ENCODE measurements at regions of chr12 and their contacts with region 1.

Region 1: GRCh38 chr12:38906482-38907170 is 1.2 kb upstream of the CPNE8 start:
- DNase-seq: peak; percentile 93
- H3K4me3 Mint-ChIP-seq: peak overlapping the region; percentile 93
- H3K27ac Mint-ChIP-seq: peak overlapping the region; percentile 95
- H3K4me1 Mint-ChIP-seq: peaks cover 32% of the 10 kb centered on the region
- H3K27me3 Mint-ChIP-seq: peaks cover 18% of the 10 kb centered on the region

Region 2: GRCh38 chr12:38316391-38317129 is 590.1 kb before region 1 on chr12 and contains the start of gene ALG10B:
- intact Hi-C with region 1: loop called (anchors 5 kb)
- DNase-seq: peak; percentile 98
- H3K4me3 Mint-ChIP-seq: peak within 1 kb of the TSS; percentile 98
- H3K27ac Mint-ChIP-seq: peak within 1 kb of the TSS; percentile 96
- H3K4me1 Mint-ChIP-seq: peaks cover 13% of the 10 kb centered on the region
- H3K27me3 Mint-ChIP-seq: no peaks in the 10 kb centered on the region
- total RNA-seq, gene ALG10B: 15.1 and 16.0 TPM in 2 replicates

Region 3: DNA sequence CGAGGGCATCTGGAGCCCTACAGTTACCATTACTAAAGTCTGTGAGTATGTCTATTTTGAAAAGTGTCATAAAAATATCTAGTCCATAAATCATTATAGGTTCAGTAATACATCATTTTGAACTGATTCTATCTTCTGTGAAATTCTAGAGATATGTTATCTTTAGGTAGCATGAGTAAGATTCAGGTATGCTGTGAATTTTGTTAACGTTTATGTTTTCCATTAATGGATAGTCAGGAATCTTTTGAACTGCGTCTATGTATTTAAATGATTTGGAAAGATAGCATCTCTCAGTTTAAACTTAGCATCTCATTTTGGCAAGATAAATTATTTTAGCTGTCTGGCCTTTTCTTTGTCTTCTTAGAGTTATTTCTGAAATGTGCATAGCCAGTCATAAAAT is 581.7 kb before region 1 on chr12:
- intact Hi-C with region 1: loop called (anchors 5 kb)
- DNase-seq: no peak
- H3K4me3 Mint-ChIP-seq: no peak overlapping the region
- H3K27ac Mint-ChIP-seq: no peak overlapping the region
- H3K4me1 Mint-ChIP-seq: no peaks in the 10 kb centered on the region
- H3K27me3 Mint-ChIP-seq: no peaks in the 10 kb centered on the region

Region 4: DNA sequence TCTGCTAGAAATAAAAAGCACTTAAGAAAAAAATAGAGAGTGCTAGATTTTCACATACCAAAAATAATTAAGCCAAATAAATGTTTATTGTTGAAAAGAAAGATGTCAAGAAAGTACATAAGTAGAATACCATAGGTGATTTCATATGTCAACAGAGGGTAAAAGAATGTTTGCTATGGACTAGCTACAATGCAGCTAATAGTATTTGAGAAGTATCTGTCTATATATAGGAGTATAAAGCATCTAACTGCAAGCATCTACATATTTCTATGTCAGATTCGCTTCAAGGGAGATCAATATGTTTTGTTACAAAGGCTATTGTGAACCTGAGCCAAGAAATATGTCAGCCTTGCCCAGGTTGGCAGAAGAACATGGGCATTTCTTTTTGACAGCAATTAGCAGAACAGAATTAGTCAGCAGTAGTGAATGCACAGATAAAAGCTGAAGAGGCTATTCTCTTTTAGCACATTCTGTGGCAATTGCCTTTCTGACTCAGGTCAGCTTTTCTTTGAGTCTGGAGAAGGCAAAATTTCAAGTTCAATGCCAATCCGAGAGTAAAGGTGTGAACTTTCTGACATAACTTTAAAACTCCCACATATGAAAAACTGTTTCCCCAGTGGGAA is 450.0 kb before region 1 on chr12:
- intact Hi-C with region 1: no loop called
- DNase-seq: no peak
- H3K4me3 Mint-ChIP-seq: no peak overlapping the region
- H3K27ac Mint-ChIP-seq: no peak overlapping the region
- H3K4me1 Mint-ChIP-seq: no peaks in the 10 kb centered on the region
- H3K27me3 Mint-ChIP-seq: no peaks in the 10 kb centered on the region

Region 5: DNA sequence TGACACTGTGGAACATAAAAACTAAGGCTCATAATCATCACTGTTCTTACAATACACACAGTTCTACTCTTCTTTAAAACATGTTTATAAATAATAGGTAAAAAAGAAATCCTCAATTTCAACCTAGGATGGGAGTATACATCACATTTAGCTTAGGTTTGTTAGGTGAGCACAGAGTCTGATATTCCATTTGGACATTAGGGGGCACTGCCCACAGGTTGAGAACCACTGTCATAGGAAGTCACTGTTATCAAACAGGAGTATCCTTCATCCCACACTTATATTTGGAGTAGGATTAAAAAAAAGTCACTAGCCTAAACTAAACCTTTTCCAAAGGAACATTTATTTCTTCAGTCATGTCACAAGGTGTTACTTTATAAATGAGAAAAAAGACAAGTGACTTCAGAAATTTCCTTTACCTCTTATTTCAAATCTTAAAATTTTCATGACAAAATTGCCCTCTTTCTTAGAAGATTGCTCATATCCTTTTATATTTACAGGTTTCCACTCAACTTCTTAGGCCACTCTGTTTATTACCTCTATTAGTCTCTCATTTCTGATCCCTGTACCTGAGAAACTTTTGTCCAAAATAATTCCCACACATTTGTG is 241.9 kb before region 1 on chr12:
- intact Hi-C with region 1: loop called (anchors 5 kb)
- DNase-seq: no peak
- H3K4me3 Mint-ChIP-seq: no peak overlapping the region
- H3K27ac Mint-ChIP-seq: no peak overlapping the region
- H3K4me1 Mint-ChIP-seq: no peaks in the 10 kb centered on the region
- H3K27me3 Mint-ChIP-seq: no peaks in the 10 kb centered on the region

Region 6: GRCh38 chr12:38771871-38772270 is 134.8 kb before region 1 on chr12:
- intact Hi-C with region 1: loop called (anchors 1 kb)
- DNase-seq: peak; percentile 71
- H3K4me3 Mint-ChIP-seq: peak overlapping the region; percentile 50
- H3K27ac Mint-ChIP-seq: peak overlapping the region; percentile 72
- H3K4me1 Mint-ChIP-seq: peaks cover 9% of the 10 kb centered on the region
- H3K27me3 Mint-ChIP-seq: no peaks in the 10 kb centered on the region

Region 7: GRCh38 chr12:39499296-39499695 is 592.7 kb after region 1 on chr12:
- intact Hi-C with region 1: no loop called
- DNase-seq: no peak
- H3K4me3 Mint-ChIP-seq: no peak overlapping the region
- H3K27ac Mint-ChIP-seq: no peak overlapping the region
- H3K4me1 Mint-ChIP-seq: no peaks in the 10 kb centered on the region
- H3K27me3 Mint-ChIP-seq: no peaks in the 10 kb centered on the region